Breast epithelium (tissue), 4 donors: ENCODE measurements at regions of chr1 and their contacts with region 1.

Region 1: DNA sequence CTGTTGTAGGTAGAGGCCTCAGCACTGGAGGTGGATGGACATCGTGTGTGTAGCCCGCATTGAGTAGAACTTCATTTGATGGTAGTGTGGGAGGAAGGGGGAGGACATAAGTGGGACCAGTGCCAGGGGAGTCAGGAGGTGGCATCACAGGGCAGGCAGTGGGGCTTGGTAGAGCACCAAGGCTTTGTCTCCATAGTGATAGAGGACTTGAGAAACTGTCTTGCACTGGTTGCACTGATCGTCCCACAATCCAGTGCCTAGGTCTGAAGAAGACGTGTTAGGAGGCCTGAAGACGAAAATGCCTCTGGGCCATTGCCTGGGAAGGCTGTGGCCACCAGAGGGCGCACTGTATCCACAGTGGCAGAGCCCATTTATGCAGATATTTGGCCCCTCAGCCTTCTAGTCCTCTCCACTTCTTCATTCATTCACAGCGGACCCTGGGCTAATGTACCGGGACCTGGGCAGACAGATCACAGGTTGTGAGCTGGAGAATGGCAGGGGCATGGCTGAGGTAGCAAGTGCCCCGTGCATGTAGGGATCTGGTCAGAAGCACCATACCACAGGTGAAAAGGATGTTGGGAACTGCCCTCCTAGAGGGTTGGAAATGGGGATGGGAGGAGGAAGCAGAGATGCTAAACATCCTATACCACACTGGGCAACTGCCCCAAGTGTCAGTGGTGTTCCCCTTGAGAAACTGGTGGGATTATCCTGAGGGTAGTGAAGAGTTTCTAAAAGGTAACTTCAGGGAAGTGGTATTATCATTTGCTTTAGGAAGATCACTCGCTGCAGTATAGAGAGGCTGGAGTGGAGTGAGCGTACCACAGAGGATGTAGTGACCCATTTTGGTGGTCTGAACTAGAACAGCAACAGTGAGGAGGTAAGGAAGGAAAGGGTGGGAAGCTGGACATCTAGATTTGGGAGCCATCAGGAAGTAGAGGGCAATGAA is 95.3 kb downstream of the PIK3R3 start:
- DNase-seq: peak; percentile 81 to 85
- H3K4me3 ChIP-seq: no peak overlapping the region
- H3K27ac ChIP-seq: peak overlapping the region; percentile 1 to 34
- H3K4me1 ChIP-seq: no peaks in the 10 kb centered on the region
- H3K27me3 ChIP-seq: no peaks in the 10 kb centered on the region
- CTCF ChIP-seq: peak; percentile 87 to 98 (median 98)
- POLR2A ChIP-seq: no peak

Region 2: GRCh38 chr1:45750298-45751038 is 286.7 kb before region 1 on chr1 and contains the start of gene IPP:
- intact Hi-C with region 1: loop called (anchors 10 kb)
- DNase-seq: peak; percentile 92 to 95
- H3K4me3 ChIP-seq: peak within 1 kb of the TSS; percentile 62 to 77 (median 65)
- H3K27ac ChIP-seq: peak within 1 kb of the TSS; percentile 95 to 97
- H3K4me1 ChIP-seq: peaks cover 0 to 4% of the 10 kb centered on the region in 2 donors
- H3K27me3 ChIP-seq: no peaks in the 10 kb centered on the region
- CTCF ChIP-seq: peak in 1 of 3 donors; percentile 13
- POLR2A ChIP-seq: peak; percentile 87
- total RNA-seq, gene IPP: 10.5 to 15.4 (median 11.4) TPM

Region 3: GRCh38 chr1:45995298-45995697 is 41.9 kb before region 1 on chr1:
- intact Hi-C with region 1: no loop called
- DNase-seq: no peak
- H3K4me3 ChIP-seq: no peak overlapping the region
- H3K27ac ChIP-seq: no peak overlapping the region
- H3K4me1 ChIP-seq: no peaks in the 10 kb centered on the region
- H3K27me3 ChIP-seq: no peaks in the 10 kb centered on the region
- CTCF ChIP-seq: no peak
- POLR2A ChIP-seq: no peak

Region 4: DNA sequence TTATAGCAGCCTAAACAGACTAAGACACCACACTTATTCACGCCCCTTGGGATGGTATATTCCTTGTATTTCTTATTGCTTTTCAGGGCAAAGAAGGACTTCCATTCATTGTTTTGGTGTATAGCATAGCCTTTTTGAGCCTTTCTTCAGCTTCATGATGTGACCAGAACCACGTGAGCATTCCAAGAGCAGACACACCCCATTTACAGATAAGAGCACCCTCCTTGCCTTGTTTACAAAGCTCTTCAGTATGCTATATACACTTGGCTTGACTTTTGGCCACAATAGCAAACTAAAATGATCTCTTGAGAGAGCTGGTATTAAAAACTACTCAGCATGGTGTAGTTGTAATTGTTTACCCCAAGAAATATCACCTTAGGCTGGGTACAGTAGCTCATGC is 16.6 kb after region 1 on chr1:
- intact Hi-C with region 1: no loop called
- DNase-seq: no peak
- H3K4me3 ChIP-seq: no peak overlapping the region
- H3K27ac ChIP-seq: no peak overlapping the region
- H3K4me1 ChIP-seq: no peaks in the 10 kb centered on the region
- H3K27me3 ChIP-seq: no peaks in the 10 kb centered on the region
- CTCF ChIP-seq: no peak
- POLR2A ChIP-seq: no peak

Region 5: DNA sequence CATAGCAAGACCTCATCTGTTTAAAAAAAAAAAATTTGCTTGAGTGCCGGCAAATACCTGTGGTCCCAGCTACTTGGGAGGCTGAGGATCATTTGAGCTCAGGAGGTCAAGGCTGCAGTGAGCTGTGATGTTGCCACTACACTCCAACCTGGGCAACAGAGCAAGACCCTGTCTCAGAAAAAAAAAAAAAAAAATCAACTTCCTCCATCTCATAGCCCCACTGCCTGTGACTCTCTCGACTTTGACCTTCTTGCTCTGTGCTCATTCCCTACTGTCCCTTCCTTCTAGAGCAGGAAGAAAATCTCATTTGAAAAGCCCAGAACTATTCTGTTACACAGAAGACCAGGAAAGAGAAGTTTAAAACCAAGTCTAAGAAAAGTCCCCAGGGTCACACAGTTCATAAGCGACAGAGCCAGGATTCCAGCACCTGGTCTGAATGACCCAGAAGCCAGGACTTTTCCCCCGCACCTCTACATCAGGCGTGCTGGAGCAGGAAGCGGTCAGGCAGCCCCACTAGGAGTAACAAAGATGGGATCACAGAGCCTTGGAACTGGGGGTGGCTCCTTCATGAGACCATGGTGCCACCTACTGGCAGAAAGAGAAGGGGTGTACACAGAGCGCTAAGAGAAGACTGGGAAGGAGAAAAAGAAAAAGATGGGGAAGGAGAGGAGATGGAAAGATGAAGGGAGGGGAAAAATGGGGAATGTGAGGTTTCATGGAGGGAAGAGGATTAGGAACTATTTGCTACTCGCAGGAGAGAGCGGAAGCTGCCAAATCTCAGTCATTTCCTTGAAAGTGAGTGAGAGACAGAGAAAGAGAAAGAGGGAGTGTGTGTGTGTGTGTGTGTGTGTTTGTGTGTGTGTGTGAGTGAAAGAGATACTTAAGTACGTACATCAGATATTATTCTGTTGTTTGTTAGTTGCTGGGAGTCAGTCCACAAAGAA is 142.2 kb after region 1 on chr1:
- intact Hi-C with region 1: loop called (anchors 5 kb)
- DNase-seq: peak; percentile 77 to 85
- H3K4me3 ChIP-seq: no peak overlapping the region
- H3K27ac ChIP-seq: peak overlapping the region; percentile 43 to 77
- H3K4me1 ChIP-seq: peaks cover 3 to 16% of the 10 kb centered on the region in 2 donors
- H3K27me3 ChIP-seq: no peaks in the 10 kb centered on the region
- CTCF ChIP-seq: peak; percentile 94 to 98 (median 95)
- POLR2A ChIP-seq: no peak